Transverse colon (tissue), 4 donors: ENCODE measurements at regions of chr11 and their contacts with region 1.

Region 1: GRCh38 chr11:107898270-107898669 is 30.0 kb upstream of the RAB39A start:
- DNase-seq: no peak
- H3K4me3 ChIP-seq: no peak overlapping the region
- H3K27ac ChIP-seq: no peak overlapping the region
- H3K4me1 ChIP-seq: no peaks in the 10 kb centered on the region
- H3K27me3 ChIP-seq: no peaks in the 10 kb centered on the region
- CTCF ChIP-seq: peak; percentile 42 to 67 (median 48)
- EP300 ChIP-seq: no peak
- POLR2A ChIP-seq: no peak

Region 2: DNA sequence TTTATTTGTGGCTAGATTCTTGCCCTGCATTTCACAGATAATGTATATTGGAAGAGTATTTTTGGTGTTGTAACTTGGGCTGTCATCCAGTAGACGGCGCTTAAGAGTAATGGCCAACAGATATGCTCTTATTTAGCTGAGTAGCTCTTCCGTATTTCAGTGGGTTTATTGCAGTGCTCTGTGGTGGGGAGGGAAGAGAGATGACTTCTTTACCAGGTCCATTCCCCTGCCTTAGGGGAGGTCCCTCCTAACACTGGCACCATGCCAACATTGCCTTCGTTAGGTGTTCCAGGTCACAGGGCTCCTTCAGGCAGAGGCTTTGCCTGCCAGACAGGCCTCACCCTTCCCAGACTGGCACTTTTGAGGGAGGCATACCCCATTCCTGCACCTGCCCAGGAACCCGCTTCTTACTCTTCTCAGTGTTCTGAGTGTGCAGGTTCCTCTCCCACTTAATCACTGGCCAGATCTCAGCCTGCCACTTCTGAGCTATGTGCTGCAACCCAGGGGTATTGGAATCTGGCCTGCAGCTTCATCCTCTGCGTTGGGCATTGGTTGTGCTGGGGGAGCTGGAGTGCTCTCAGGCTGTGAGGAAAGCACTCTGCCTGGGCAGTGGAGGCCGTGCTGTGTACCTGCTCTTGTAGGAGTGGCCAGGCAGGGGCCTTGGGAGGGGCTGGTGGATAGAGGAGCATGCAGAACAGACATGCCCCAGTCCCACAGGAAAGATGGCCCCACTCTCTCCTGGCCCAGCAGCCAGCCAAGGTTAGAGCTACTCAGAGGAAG is 157.0 kb before region 1 on chr11:
- in situ Hi-C with region 1: loop called in 1 of 4 experiments (anchors 10 kb)
- intact Hi-C with region 1: no loop called
- DNase-seq: peak; percentile 13
- H3K4me3 ChIP-seq: no peak overlapping the region
- H3K27ac ChIP-seq: no peak overlapping the region
- H3K4me1 ChIP-seq: no peaks in the 10 kb centered on the region
- H3K27me3 ChIP-seq: no peaks in the 10 kb centered on the region
- CTCF ChIP-seq: peak; percentile 41 to 71 (median 59)
- EP300 ChIP-seq: no peak
- POLR2A ChIP-seq: no peak

Region 3: DNA sequence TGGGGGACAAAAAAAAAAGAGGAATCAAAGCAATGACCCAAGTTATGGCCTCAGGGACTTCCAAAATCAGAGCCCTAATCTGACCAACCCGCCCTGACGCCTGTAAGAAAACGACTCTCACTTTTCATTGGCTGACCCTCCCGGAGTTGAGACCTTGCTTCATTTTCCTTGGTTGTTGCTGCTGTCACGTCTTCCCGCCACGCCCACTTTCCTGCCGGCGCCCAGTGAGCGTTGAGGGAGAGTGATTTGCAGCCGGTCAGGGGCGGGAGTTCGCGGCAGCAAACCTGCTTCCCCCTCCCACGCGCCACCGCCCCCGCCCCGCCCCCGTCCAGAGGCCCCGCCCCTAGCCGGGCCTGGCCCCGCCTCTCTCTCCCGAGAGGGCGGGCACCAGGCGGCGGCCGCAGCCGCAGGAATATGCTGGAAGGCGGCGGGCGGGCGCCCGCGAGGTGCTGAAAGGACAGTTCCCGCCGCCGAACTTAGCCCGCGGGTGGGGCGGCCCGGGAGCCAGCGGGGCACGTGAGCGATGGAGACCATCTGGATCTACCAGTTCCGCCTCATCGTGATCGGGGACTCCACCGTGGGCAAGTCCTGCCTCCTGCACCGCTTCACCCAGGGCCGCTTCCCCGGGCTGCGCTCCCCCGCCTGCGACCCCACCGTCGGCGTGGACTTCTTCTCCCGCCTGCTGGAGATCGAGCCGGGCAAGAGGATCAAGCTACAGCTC is 29.9 kb after region 1 on chr11 and contains the start of gene RAB39A:
- in situ Hi-C with region 1: no loop called
- intact Hi-C with region 1: no loop called
- DNase-seq: peak; percentile 89
- H3K4me3 ChIP-seq: peak within 1 kb of the TSS; percentile 10 to 63 (median 30)
- H3K27ac ChIP-seq: peak within 1 kb of the TSS; percentile 33 to 58 (median 52)
- H3K4me1 ChIP-seq: peaks cover 8 to 19% (median 10%) of the 10 kb centered on the region in 4 donors
- H3K27me3 ChIP-seq: peaks cover 33% of the 10 kb centered on the region
- CTCF ChIP-seq: no peak
- EP300 ChIP-seq: no peak
- POLR2A ChIP-seq: no peak
- total RNA-seq, gene RAB39A: 0.68 TPM in 1 of 4 donors, not detected in the others